Endothelial cell of umbilical vein (primary cell): ENCODE measurements at regions of chr6 and their contacts with region 1.

Region 1: GRCh38 chr6:142946181-142946923 is 1.4 kb upstream of the HIVEP2 start:
- DNase-seq: peak; percentile 97
- H3K4me3 ChIP-seq: peak overlapping the region; percentile 58 to 91 (median 85)
- H3K27ac ChIP-seq: peak overlapping the region; percentile 85
- H3K4me1 ChIP-seq: peaks cover 17% of the 10 kb centered on the region
- H3K27me3 ChIP-seq: no peaks in the 10 kb centered on the region
- CTCF ChIP-seq: no peak
- POLR2A ChIP-seq: no peak

Region 2: GRCh38 chr6:142146828-142147662 is 799.3 kb before region 1 on chr6 and contains the starts of genes NMBR and VTA1:
- CTCF ChIA-PET with region 1: no interaction called
- POLR2A ChIA-PET with region 1: no interaction called
- dilution Hi-C with region 1: no loop called
- intact Hi-C with region 1: loop called (anchors 10 kb)
- DNase-seq: peak; percentile 99
- H3K4me3 ChIP-seq: peak within 1 kb of the TSS; percentile 77 to 92 (median 91)
- H3K27ac ChIP-seq: peak within 1 kb of the TSS; percentile 50
- H3K4me1 ChIP-seq: peaks cover 21% of the 10 kb centered on the region
- H3K27me3 ChIP-seq: no peaks in the 10 kb centered on the region
- CTCF ChIP-seq: peak; percentile 79 to 89
- POLR2A ChIP-seq: peak; percentile 90
- total RNA-seq, gene NMBR: not detected in 2 replicates
- total RNA-seq, gene VTA1: 40.9 and 45.8 TPM in 2 replicates

Region 3: GRCh38 chr6:142566628-142567396 is 379.5 kb before region 1 on chr6:
- CTCF ChIA-PET with region 1: no interaction called
- POLR2A ChIA-PET with region 1: no interaction called
- dilution Hi-C with region 1: no loop called
- intact Hi-C with region 1: loop called (anchors 2 kb)
- DNase-seq: peak; percentile 62
- H3K4me3 ChIP-seq: no peak overlapping the region
- H3K27ac ChIP-seq: no peak overlapping the region
- H3K4me1 ChIP-seq: no peaks in the 10 kb centered on the region
- H3K27me3 ChIP-seq: peaks cover 2 to 16% of the 10 kb centered on the region in 2 experiments
- CTCF ChIP-seq: peak; percentile 82 to 85
- POLR2A ChIP-seq: no peak

Region 4: DNA sequence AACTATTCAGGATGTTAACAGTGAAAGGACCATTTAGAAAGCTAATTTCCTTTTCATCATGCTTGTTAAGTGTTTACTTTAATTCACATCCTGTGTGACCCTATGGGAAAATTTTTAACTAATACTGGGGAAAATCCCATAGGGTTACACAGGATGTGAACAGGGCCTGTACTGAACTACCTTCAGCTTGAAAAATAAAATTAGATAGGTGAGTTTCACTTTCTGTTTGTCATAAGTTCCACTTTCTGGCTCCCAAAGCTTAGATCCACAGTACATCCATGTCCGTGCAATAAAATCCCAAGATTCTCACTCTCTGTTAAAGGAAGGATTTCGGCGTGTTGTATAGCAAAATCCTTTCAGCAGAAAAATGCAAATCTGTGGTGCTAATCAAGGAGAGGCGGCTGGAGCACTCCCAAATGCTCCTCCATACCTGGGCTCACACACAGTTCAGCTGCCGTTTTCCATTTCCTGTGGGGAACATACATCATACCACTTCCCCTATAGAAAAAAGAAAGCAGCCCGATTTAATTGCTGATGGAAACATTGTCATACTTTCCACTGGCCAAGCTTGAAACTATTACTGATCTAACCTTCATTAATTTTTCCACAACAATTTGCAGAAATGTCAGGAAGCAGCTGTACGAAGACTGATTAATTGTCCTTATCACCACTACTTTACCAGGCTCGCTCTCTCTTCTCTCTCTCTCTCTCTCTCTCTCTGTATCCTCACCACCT is 126.6 kb before region 1 on chr6:
- CTCF ChIA-PET with region 1: interaction called, 6 read pairs
- POLR2A ChIA-PET with region 1: no interaction called
- dilution Hi-C with region 1: no loop called
- intact Hi-C with region 1: loop called (anchors 1 kb)
- DNase-seq: peak; percentile 95
- H3K4me3 ChIP-seq: peak overlapping the region; percentile 16 to 71 (median 27)
- H3K27ac ChIP-seq: peak overlapping the region; percentile 93
- H3K4me1 ChIP-seq: peaks cover 16% of the 10 kb centered on the region
- H3K27me3 ChIP-seq: no peaks in the 10 kb centered on the region
- CTCF ChIP-seq: no peak
- POLR2A ChIP-seq: no peak

Region 5: GRCh38 chr6:142871910-142872331 is 74.4 kb before region 1 on chr6:
- CTCF ChIA-PET with region 1: interaction called, 3 read pairs
- POLR2A ChIA-PET with region 1: no interaction called
- dilution Hi-C with region 1: no loop called
- intact Hi-C with region 1: loop called (anchors 1 kb)
- DNase-seq: peak; percentile 90
- H3K4me3 ChIP-seq: no peak overlapping the region
- H3K27ac ChIP-seq: peak overlapping the region; percentile 59
- H3K4me1 ChIP-seq: peaks cover 40% of the 10 kb centered on the region
- H3K27me3 ChIP-seq: no peaks in the 10 kb centered on the region
- CTCF ChIP-seq: no peak
- POLR2A ChIP-seq: no peak

Region 6: GRCh38 chr6:143026696-143027449 is 80.5 kb after region 1 on chr6:
- CTCF ChIA-PET with region 1: interaction called, 13 read pairs
- POLR2A ChIA-PET with region 1: no interaction called
- dilution Hi-C with region 1: no loop called
- intact Hi-C with region 1: loop called (anchors 5 kb)
- DNase-seq: peak; percentile 61
- H3K4me3 ChIP-seq: no peak overlapping the region
- H3K27ac ChIP-seq: no peak overlapping the region
- H3K4me1 ChIP-seq: no peaks in the 10 kb centered on the region
- H3K27me3 ChIP-seq: no peaks in the 10 kb centered on the region
- CTCF ChIP-seq: peak; percentile 66 to 72
- POLR2A ChIP-seq: no peak

Region 7: DNA sequence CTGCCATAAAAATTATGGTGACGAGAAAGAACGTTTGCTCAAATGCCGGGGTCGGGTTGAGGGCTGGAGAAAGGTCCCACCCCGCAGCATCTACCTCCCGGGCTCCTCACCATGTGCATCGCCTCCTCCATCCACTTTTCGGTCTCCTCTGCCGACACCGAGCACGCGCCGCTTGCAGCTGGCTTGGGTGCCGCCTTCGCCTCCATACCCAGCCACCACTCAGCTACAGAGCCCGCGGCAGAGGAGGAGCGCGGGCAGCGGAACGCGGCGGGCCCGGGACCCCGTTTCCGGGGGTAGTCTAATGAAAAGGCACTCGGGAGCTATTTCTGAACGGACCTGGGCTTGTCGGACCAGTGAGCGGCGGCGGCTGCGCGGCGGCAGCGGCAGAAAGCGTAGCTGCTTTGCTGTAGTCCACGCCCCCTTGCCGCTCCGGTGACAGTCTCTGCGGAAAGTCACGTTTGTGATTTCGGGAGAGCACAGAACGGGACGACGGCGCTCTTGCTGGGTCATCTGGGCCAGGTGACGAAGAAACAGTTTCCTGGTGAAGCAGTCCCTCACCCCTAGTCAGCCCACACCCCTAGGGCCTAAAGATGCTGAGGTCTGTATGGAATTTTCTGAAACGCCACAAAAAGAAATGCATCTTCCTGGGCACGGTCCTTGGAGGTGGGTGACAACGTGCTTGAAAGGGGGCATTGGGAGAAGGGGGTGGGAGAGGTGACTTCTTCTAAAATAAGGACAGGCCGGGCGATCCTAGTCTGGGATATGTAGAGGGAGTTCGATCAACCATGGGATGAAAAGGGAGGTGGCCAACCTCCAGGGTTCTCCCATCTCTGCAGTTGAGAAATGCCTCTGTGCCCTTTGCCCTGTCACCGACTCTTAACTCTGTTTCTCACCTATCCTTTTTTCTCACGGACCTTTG is 504.4 kb after region 1 on chr6 and contains the starts of genes ADAT2 and PEX3:
- CTCF ChIA-PET with region 1: no interaction called
- POLR2A ChIA-PET with region 1: no interaction called
- dilution Hi-C with region 1: no loop called
- intact Hi-C with region 1: loop called (anchors 5 kb)
- DNase-seq: peak; percentile 94
- H3K4me3 ChIP-seq: peak within 1 kb of the TSS; percentile 52 to 90 (median 73)
- H3K27ac ChIP-seq: peak within 1 kb of the TSS; percentile 65
- H3K4me1 ChIP-seq: peaks cover 18% of the 10 kb centered on the region
- H3K27me3 ChIP-seq: no peaks in the 10 kb centered on the region
- CTCF ChIP-seq: no peak
- POLR2A ChIP-seq: peak; percentile 87
- total RNA-seq, gene ADAT2: 9.8 and 11.3 TPM in 2 replicates
- total RNA-seq, gene PEX3: 20.0 and 21.7 TPM in 2 replicates